ENCODE measurements at regions of chr13 and their contacts with region 1.

Region 1: DNA sequence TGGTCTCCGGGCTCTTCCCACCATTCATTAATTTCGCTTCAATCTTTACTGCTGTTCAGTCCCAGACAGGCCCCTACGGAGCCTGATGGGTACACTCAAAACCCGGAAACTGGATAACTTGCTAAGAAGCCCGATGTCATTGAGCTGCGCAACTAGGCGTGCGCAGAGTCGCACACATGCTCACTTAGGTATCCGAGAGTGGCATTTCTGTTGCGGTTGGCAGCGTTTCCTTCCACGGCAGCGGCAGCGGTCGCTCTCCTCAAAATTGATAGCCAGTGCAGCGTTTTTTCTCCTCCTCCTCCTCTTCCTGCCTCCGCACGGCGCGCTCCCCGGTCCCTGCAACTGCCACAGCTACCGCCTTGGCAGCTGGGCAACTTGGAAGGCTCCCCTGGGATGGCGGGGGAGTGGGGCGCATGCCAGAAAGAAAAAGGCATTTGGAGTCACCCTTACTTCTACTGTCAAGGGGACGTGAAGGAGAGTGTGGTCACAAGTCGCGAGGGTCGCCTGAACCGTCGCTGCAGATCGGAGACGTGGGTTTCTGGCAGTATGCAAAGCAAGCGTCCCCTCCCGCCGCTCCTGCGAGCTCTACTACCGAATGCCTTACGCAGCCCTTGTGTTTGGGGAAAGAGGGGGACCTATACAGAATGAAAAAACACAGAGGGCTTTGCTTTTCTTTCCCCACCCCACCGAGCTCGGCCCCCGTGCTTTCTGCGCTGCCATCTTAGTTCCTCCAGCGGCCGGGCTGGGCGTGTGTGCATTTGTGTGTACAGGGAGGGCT is 2.4 kb upstream of the MYCBP2 start:
- DNase-seq: peak; percentile 94
- H3K4me3 ChIP-seq: peak overlapping the region; percentile 67 to 90 (median 69)
- H3K27ac ChIP-seq: peak overlapping the region; percentile 75
- H3K4me1 ChIP-seq: peaks cover 31% of the 10 kb centered on the region
- H3K27me3 ChIP-seq: peaks cover 0 to 5% of the 10 kb centered on the region in 2 experiments
- CTCF ChIP-seq: no peak
- POLR2A ChIP-seq: peak; percentile 9

Region 2: DNA sequence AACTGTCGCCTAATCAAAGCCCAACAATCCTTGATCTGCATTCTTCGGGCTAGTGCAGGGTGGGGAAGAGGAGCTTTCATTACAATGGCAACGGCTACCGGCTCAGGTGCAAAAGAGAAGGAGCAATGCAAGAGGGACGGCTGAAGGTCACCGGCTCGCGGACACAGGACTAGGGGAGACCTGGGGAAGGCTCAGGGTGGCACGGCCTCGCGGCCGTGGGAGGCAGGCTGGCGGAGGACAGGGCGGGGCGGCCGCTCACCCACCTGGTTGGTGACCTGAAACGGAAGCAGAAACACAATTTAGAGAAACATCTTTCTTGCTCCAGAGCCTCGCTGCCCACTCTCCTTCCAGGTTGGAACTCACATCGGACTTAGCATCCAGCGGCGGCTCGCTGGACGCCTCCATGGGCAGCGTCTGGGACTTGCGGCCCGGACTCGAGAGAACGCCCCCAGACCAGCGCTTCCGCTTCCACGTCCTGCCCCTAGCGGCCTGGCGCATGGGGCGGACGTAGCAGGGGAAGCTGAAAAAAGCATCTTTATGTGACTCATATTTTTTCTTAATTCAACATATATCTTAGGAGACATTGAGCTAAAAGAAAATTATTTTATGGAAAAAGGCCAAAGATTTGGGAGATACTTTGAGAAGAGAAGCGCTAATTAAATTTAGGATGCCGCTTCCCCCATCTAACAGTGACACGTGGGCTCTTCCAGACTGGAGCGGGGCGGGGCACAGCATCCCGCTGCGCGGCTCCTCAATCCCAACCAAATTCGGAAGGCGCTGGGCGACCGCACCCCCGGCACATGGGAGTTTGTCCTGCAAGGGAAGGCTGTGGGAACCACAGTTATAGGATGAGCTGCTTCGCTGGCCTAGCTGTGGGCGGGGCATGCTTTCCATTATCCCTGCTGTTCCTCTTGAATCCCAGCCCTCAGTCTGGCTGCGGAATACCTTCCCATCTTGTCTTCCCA is 1791.6 kb before region 1 on chr13 and contains the start of gene COMMD6:
- CTCF ChIA-PET with region 1: no interaction called
- POLR2A ChIA-PET with region 1: no interaction called
- dilution Hi-C with region 1: no loop called
- intact Hi-C with region 1: loop called (anchors 5 kb)
- DNase-seq: peak; percentile 83
- H3K4me3 ChIP-seq: peak within 1 kb of the TSS; percentile 56 to 81 (median 64)
- H3K27ac ChIP-seq: peak within 1 kb of the TSS; percentile 79
- H3K4me1 ChIP-seq: peaks cover 8% of the 10 kb centered on the region
- H3K27me3 ChIP-seq: no peaks in the 10 kb centered on the region
- CTCF ChIP-seq: no peak
- POLR2A ChIP-seq: peak; percentile 97
- total RNA-seq, gene COMMD6: 112 and 122 TPM in 2 replicates

Region 3: DNA sequence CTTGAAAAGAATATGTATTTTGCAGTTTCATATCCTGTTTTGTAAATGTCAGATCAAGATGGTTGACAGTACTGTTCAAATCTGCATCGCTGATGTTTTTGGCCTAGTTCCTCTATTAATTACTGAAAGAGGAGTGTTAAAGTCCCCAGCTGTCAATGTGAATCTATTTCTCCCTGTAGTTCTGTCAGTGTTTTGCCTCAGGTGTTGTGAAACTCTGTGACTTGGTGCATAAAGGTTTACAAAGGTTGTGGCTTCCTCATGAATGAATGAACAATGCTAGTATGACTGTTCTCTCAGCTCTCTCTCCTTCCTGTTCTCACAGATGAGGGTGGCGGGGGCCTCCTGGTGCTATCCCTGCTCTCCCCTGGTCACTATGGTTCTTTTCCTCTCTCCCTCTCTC is 144.9 kb before region 1 on chr13:
- CTCF ChIA-PET with region 1: interaction called, 3 read pairs
- POLR2A ChIA-PET with region 1: no interaction called
- dilution Hi-C with region 1: no loop called
- intact Hi-C with region 1: loop called (anchors 5 kb)
- DNase-seq: peak; percentile 30
- H3K4me3 ChIP-seq: no peak overlapping the region
- H3K27ac ChIP-seq: no peak overlapping the region
- H3K4me1 ChIP-seq: peaks cover 13% of the 10 kb centered on the region
- H3K27me3 ChIP-seq: no peaks in the 10 kb centered on the region
- CTCF ChIP-seq: no peak
- POLR2A ChIP-seq: no peak

Region 4: DNA sequence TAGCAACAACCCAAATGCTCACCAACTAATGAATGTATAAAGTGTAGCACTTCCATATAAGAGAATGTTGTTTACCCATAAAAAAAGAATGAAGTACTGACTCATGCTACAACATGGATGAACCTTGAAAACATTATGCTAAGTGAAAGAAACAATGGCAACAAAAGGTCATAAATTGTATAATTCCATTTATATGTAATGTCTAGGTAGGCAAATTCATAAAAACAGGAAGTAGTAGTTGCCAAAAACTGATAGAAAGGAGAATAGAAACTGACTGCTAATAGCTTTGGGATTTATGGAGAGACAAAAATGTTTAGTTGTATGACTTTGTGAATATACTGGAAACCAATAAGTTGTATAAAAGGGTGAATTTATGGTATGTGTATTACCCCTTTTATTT is 24.0 kb before region 1 on chr13:
- CTCF ChIA-PET with region 1: interaction called, 4 read pairs
- POLR2A ChIA-PET with region 1: no interaction called
- dilution Hi-C with region 1: no loop called
- intact Hi-C with region 1: loop called (anchors 1 kb)
- DNase-seq: peak; percentile 87
- H3K4me3 ChIP-seq: no peak overlapping the region
- H3K27ac ChIP-seq: peak overlapping the region; percentile 82
- H3K4me1 ChIP-seq: peaks cover 42% of the 10 kb centered on the region
- H3K27me3 ChIP-seq: no peaks in the 10 kb centered on the region
- CTCF ChIP-seq: no peak
- POLR2A ChIP-seq: no peak

Region 5: DNA sequence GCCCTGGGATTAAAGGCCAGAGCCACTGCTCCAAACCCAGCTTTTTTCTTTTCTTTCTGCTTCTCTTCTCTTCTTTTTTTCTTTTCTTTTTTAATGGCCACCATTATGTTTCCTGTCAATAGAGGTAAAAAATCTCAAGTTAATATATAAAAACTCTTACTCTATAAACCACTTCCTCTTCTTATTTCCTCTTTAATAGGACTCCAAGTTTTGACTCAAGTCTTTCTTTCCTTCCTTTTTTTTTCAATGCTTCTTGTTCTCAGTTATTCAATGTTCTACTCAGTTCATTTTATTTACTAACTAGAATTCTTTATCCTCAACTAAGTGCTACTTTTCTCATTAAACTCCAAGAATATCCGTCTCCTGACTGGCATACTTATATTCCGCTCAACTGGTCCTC is 24.7 kb after region 1 on chr13:
- CTCF ChIA-PET with region 1: no interaction called
- POLR2A ChIA-PET with region 1: no interaction called
- dilution Hi-C with region 1: no loop called
- intact Hi-C with region 1: no loop called
- DNase-seq: no peak
- H3K4me3 ChIP-seq: no peak overlapping the region
- H3K27ac ChIP-seq: no peak overlapping the region
- H3K4me1 ChIP-seq: no peaks in the 10 kb centered on the region
- H3K27me3 ChIP-seq: peaks cover 2 to 3% of the 10 kb centered on the region in 2 experiments
- CTCF ChIP-seq: no peak
- POLR2A ChIP-seq: no peak

Region 6: DNA sequence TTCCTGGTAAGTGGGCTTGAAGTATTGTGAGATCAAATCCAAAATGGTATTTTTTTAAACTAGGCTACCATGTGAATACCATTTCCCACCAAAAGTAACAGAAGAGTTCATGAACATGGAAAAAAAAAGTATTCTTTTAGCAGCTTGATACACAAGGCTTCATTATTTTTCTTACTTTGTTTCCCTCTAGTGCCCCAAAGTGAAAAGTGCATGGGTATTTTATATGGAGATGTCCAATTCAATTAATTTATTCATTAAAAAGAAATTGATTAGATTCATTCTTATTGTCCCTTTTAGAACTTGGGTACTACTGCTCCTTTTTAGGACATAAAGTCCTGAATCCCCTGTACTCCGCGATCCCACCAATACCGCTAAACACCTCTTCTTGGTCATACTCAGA is 177.6 kb after region 1 on chr13:
- CTCF ChIA-PET with region 1: no interaction called
- POLR2A ChIA-PET with region 1: no interaction called
- dilution Hi-C with region 1: no loop called
- intact Hi-C with region 1: loop called (anchors 2 kb)
- DNase-seq: peak; percentile 58
- H3K4me3 ChIP-seq: no peak overlapping the region
- H3K27ac ChIP-seq: no peak overlapping the region
- H3K4me1 ChIP-seq: peaks cover 29% of the 10 kb centered on the region
- H3K27me3 ChIP-seq: peaks cover 4 to 5% of the 10 kb centered on the region in 2 experiments
- CTCF ChIP-seq: peak; percentile 3 to 17
- POLR2A ChIP-seq: no peak

Region 7: DNA sequence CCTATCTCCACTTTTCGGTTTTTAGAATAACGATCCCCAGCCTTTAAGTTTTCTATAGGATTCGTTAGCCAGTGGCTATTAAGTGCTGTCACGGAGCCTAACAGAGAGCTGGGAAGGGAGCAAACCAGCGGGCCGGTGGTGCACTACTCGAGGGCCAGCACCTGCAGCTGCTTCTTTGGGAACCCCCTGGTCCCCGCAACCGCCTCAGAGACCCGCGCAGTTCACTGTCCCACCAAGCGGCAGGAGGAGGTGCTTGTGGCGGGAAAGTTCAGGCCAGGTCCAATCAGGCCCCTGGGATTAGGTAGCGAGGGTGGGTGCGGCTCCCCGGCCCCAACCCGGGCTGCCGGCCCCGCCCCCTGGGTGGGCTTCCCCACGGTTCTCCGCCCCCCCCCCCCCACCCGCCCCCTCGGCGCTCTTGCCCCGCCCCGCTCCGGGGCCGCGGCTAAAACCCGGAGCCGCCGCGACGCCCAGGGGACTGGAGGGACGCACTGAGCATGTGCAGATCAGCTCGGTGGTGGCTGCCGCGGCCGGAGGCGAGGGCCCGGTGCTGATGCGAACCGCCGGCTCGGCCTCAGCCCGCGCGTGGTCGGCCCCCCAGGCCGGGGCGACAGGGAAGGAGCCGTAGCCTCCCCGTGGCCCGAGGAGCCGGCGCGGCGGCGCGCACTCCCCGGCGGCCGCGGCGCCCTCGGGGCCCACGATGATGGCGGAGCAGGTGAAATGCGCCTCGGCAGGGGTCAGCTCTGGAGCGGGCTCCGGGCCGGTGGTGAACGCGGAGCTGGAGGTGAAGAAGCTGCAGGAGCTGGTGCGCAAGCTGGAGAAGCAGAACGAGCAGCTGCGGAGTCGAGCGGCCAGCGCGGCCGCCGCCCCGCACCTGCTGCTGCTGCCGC is 368.1 kb after region 1 on chr13 and contains the start of gene SLAIN1:
- CTCF ChIA-PET with region 1: no interaction called
- POLR2A ChIA-PET with region 1: no interaction called
- dilution Hi-C with region 1: no loop called
- intact Hi-C with region 1: loop called (anchors 5 kb)
- DNase-seq: peak; percentile 61
- H3K4me3 ChIP-seq: peak within 1 kb of the TSS; percentile 65 to 87 (median 75)
- H3K27ac ChIP-seq: no peak within 1 kb of the TSS
- H3K4me1 ChIP-seq: no peaks in the 10 kb centered on the region
- H3K27me3 ChIP-seq: peaks cover 7 to 26% of the 10 kb centered on the region in 2 experiments
- CTCF ChIP-seq: no peak
- POLR2A ChIP-seq: no peak
- total RNA-seq, gene SLAIN1: 4.3 and 4.5 TPM in 2 replicates